ENCODE measurements at regions of chrX and their contacts with region 1.

Region 1: DNA sequence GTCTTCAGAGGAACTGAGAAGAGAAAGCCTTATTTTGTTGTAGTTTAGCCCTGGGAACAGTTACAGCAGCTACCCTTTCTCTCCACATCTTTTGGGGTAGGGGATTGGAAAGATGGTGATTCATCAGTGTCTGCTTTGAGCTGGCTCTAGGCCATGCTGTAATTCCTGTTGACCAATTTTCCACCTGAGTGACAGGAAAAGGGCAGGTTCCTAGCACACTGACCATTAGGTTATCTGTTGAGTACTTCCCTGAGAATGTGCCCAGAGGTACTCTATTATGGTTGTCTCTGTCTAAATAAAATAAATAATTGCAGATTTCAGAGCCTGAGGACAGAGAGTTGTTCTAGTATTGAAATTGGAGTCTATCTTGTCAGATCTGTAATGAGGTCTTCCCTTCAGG is 109.0 kb downstream of the ENOX2 start:
- DNase-seq: no peak
- ATAC-seq: no peak
- H3K4me3 Mint-ChIP-seq: no peak overlapping the region
- H3K27ac Mint-ChIP-seq: no peak overlapping the region
- H3K4me1 Mint-ChIP-seq: no peaks in the 10 kb centered on the region
- H3K27me3 Mint-ChIP-seq: no peaks in the 10 kb centered on the region

Region 2: GRCh38 chrX:130741584-130741983 is 52.4 kb before region 1 on chrX:
- CTCF ChIA-PET with region 1: no interaction called
- POLR2A ChIA-PET with region 1: no interaction called
- intact Hi-C with region 1: loop called in 1 of 2 experiments (anchors 5 kb)
- DNase-seq: no peak
- ATAC-seq: no peak
- H3K4me3 Mint-ChIP-seq: no peak overlapping the region
- H3K27ac Mint-ChIP-seq: no peak overlapping the region
- H3K4me1 Mint-ChIP-seq: no peaks in the 10 kb centered on the region
- H3K27me3 Mint-ChIP-seq: no peaks in the 10 kb centered on the region

Measured in activated CD4-positive, alpha-beta T cell treated with anti-CD3 and anti-CD28 coated beads for 36 hours (primary cell).